HCT116 (cell line): ENCODE measurements at regions of chr19 and their contacts with region 1.

Region 1: GRCh38 chr19:53103198-53103944 is at the start of gene ZNF160:
- DNase-seq: peak; percentile 90
- ATAC-seq: peak; percentile 96
- H3K4me3 ChIP-seq: peak within 1 kb of the TSS; percentile 88 to 91
- H3K27ac ChIP-seq: peak within 1 kb of the TSS; percentile 80
- H3K4me1 ChIP-seq: peaks cover 5 to 12% of the 10 kb centered on the region in 2 experiments; a peak in 3 of 4 replicates
- H3K27me3 ChIP-seq: no peaks in the 10 kb centered on the region
- CTCF ChIP-seq: no peak
- POLR2A ChIP-seq: peak; percentile 52
- RAD21 ChIP-seq: no peak
- total RNA-seq, gene ZNF160: 14.9 TPM

Region 2: DNA sequence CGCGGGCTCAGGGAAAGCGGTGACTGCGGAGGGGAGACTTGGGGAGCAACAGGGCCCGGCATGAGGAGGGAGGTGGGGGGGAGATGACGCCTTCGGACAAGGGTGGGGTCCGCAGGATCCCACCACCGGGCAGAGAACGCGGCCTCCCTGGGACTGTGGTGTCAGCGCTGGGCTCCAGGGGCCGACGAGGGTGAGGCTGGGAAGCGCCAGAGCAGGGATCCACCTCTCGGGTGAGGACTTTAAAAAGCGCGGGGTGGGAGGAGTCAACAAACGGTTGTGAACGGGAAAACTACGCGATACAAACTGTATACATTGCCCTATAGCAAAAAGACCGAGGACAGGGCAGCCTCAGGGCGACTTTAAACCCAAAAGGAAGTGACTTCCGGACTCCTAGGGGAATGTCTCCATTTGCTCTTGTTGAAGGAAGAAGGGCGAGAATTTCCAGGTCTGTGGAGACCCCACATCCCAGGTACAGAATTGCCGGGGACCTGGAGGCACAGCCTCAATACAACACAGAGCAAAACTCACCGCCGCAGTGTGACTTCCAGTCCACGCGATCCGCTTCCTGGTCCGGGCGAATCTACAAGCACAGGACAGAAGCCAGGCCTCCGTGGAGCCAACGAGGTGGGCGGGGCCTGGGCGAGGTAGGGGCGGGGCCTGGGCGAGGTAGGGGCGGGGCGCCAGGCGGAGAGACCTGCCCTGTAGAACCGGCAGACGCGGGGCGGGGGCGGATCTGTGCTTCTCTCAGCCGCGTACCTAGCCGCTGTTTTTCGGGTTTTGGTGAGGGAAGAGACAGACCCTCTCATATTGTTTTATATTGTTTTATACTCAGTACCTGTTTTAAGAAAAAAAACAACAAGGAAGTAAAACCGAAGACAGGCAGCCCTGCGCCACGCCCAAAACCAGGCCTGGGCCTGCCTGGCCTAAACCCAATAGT is 180.3 kb before region 1 on chr19 and contains the start of gene ZNF888:
- CTCF ChIA-PET with region 1: no interaction called
- POLR2A ChIA-PET with region 1: no interaction called
- RAD21 ChIA-PET with region 1: no interaction called
- intact Hi-C with region 1: loop called (anchors 2 kb)
- DNase-seq: peak; percentile 59
- ATAC-seq: peak; percentile 99
- H3K4me3 ChIP-seq: peak within 1 kb of the TSS; percentile 79 to 80
- H3K27ac ChIP-seq: peak within 1 kb of the TSS; percentile 86
- H3K4me1 ChIP-seq: peaks cover 0 to 10% of the 10 kb centered on the region in 2 experiments; a peak in 1 of 4 replicates
- H3K27me3 ChIP-seq: no peaks in the 10 kb centered on the region
- CTCF ChIP-seq: no peak
- POLR2A ChIP-seq: no peak
- RAD21 ChIP-seq: no peak
- total RNA-seq, gene ZNF888: 6.4 TPM

Region 3: DNA sequence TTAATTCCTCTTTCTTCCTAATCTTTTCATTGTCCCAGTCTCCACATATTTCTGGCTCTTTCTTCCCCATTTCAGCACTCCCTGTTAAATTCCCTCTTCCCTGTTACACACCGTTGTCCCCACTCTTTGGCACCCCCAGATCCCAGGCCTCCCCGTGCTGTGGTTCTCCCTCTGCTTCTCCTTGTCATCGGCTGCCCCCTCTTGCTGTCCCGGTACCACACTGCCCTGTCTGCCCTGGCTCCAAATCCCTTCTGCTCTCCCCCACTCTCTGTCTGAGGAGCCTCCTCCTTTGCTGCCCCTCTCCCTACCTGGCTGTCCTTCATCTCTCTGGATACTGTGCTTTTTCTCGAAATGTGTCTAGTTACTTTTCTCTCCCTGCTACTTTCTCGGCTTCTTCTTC is 28.4 kb after region 1 on chr19:
- CTCF ChIA-PET with region 1: no interaction called
- POLR2A ChIA-PET with region 1: no interaction called
- RAD21 ChIA-PET with region 1: no interaction called
- intact Hi-C with region 1: loop called (anchors 2 kb)
- DNase-seq: no peak
- ATAC-seq: no peak
- H3K4me3 ChIP-seq: no peak overlapping the region
- H3K27ac ChIP-seq: no peak overlapping the region
- H3K4me1 ChIP-seq: no peaks in the 10 kb centered on the region
- H3K27me3 ChIP-seq: no peaks in the 10 kb centered on the region
- CTCF ChIP-seq: no peak
- POLR2A ChIP-seq: no peak
- RAD21 ChIP-seq: no peak